ENCODE measurements at regions of chr1 and their contacts with region 1.

Region 1: GRCh38 chr1:37692078-37692833 is at the start of gene CDCA8:
- DNase-seq: peak; percentile 98
- H3K4me3 Mint-ChIP-seq: peak within 1 kb of the TSS; percentile 96
- H3K27ac Mint-ChIP-seq: peak within 1 kb of the TSS; percentile 90
- H3K4me1 Mint-ChIP-seq: peaks cover 28% of the 10 kb centered on the region
- H3K27me3 Mint-ChIP-seq: no peaks in the 10 kb centered on the region
- CTCF ChIP-seq: peak; percentile 41
- total RNA-seq, gene CDCA8: 17.3 and 21.8 TPM in 2 replicates

Region 2: GRCh38 chr1:37514350-37515184 is 177.7 kb before region 1 on chr1 and contains the start of gene MEAF6:
- CTCF ChIA-PET with region 1: interaction called, 3 read pairs
- POLR2A ChIA-PET with region 1: interaction called, 11 read pairs
- intact Hi-C with region 1: no loop called
- DNase-seq: peak; percentile 80
- H3K4me3 Mint-ChIP-seq: peak within 1 kb of the TSS; percentile 82
- H3K27ac Mint-ChIP-seq: peak within 1 kb of the TSS; percentile 82
- H3K4me1 Mint-ChIP-seq: peaks cover 16% of the 10 kb centered on the region
- H3K27me3 Mint-ChIP-seq: no peaks in the 10 kb centered on the region
- CTCF ChIP-seq: peak; percentile 72
- total RNA-seq, gene MEAF6: 71.3 and 72.0 TPM in 2 replicates

Region 3: DNA sequence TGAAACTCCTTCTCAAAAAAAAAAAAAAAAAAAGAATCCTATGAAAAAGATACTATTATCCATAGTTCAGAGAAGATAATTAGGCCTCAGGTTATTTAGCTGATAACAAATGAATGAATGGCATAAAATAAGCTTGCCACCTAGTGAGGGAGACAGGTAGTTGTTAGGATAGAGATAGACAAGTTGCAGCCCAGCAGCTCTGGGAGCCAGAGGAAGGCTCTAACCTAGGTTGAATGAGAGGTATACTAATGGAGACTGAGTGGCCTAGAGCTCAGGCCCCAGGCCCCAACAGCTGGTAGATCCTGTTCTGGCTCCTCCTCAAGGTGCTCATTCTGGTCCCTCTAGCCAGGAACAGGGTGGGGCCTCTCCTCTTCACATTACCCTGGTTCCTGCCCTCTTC is 37.0 kb before region 1 on chr1:
- CTCF ChIA-PET with region 1: no interaction called
- POLR2A ChIA-PET with region 1: no interaction called
- intact Hi-C with region 1: no loop called
- DNase-seq: no peak
- H3K4me3 Mint-ChIP-seq: no peak overlapping the region
- H3K27ac Mint-ChIP-seq: no peak overlapping the region
- H3K4me1 Mint-ChIP-seq: no peaks in the 10 kb centered on the region
- H3K27me3 Mint-ChIP-seq: no peaks in the 10 kb centered on the region
- CTCF ChIP-seq: no peak

Region 4: GRCh38 chr1:37676281-37677243 is 15.7 kb before region 1 on chr1:
- CTCF ChIA-PET with region 1: interaction called, 12 read pairs
- POLR2A ChIA-PET with region 1: interaction called, 4 read pairs
- intact Hi-C with region 1: no loop called
- DNase-seq: no peak
- H3K4me3 Mint-ChIP-seq: no peak overlapping the region
- H3K27ac Mint-ChIP-seq: no peak overlapping the region
- H3K4me1 Mint-ChIP-seq: no peaks in the 10 kb centered on the region
- H3K27me3 Mint-ChIP-seq: peaks cover 6% of the 10 kb centered on the region
- CTCF ChIP-seq: no peak

Region 5: DNA sequence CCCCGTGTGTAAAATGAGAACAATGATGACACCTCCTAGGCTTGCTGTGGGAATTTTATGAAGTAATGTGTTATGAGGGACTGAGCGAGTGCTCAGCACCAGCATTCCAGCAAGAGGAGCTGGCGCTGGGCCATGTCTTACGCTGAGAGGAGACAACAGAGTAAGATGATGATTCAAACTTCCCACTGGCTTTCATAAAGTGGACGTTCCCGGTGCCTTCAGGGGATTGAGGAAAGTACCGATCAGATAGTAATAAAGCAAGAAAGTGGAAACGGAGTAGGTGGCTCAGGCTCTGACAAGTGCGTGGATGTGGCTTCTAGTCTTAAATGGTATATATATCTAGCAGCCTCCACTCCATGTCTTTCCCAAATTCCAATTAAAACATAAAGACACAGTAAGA is 48.9 kb after region 1 on chr1:
- CTCF ChIA-PET with region 1: interaction called, 4 read pairs
- POLR2A ChIA-PET with region 1: interaction called, 14 read pairs
- intact Hi-C with region 1: no loop called
- DNase-seq: peak; percentile 94
- H3K4me3 Mint-ChIP-seq: peak overlapping the region; percentile 2
- H3K27ac Mint-ChIP-seq: no peak overlapping the region
- H3K4me1 Mint-ChIP-seq: peaks cover 15% of the 10 kb centered on the region
- H3K27me3 Mint-ChIP-seq: peaks cover 11% of the 10 kb centered on the region
- CTCF ChIP-seq: no peak

Region 6: GRCh38 chr1:37807555-37808368 is 115.5 kb after region 1 on chr1 and contains the starts of genes C1orf122 and YRDC:
- CTCF ChIA-PET with region 1: interaction called, 4 read pairs
- POLR2A ChIA-PET with region 1: interaction called, 99 read pairs
- intact Hi-C with region 1: loop called (anchors 2 kb)
- DNase-seq: peak; percentile 92
- H3K4me3 Mint-ChIP-seq: peak within 1 kb of the TSS; percentile 89
- H3K27ac Mint-ChIP-seq: peak within 1 kb of the TSS; percentile 96
- H3K4me1 Mint-ChIP-seq: peaks cover 10% of the 10 kb centered on the region
- H3K27me3 Mint-ChIP-seq: no peaks in the 10 kb centered on the region
- CTCF ChIP-seq: no peak
- total RNA-seq, gene C1orf122: 72.4 and 81.5 TPM in 2 replicates
- total RNA-seq, gene YRDC: 40.4 and 41.5 TPM in 2 replicates

Region 7: GRCh38 chr1:37875834-37876233 is 183.6 kb after region 1 on chr1:
- CTCF ChIA-PET with region 1: interaction called, 4 read pairs
- POLR2A ChIA-PET with region 1: no interaction called
- intact Hi-C with region 1: loop called (anchors 5 kb)
- DNase-seq: peak; percentile 38
- H3K4me3 Mint-ChIP-seq: no peak overlapping the region
- H3K27ac Mint-ChIP-seq: no peak overlapping the region
- H3K4me1 Mint-ChIP-seq: no peaks in the 10 kb centered on the region
- H3K27me3 Mint-ChIP-seq: no peaks in the 10 kb centered on the region
- CTCF ChIP-seq: peak; percentile 36

Region 8: DNA sequence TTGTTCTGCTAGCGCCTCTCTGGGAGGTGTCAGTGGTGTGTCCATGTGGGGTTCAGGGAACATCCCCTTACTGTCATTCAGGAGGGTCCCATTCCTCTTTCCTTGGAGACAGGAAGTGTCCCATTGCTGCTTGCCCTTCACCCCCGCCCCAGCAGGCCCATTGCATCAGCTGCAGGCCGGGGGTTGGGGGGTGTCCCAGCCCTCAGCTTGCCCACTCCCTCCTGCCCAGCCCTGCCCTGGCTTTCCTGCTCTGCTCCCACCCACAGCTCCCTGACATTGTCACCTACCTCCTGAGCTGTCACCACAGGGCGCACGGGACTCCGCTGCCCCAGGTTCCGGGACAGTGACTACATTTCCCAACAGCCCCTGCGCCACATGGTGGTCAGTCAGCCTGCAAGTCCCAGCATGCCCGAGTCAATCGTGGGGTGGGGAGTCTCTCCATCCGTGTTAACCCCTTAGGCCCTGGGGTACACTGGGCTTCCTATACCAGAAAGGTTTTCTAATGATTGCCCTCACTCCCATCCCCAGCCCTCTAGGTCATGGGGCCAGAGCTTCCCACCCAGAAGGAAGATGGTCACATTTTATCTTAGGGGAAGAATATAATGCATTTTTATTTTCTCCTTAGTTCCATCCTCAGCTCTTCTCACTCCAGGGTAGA is 254.6 kb after region 1 on chr1 and contains the start of gene INPP5B:
- CTCF ChIA-PET with region 1: no interaction called
- POLR2A ChIA-PET with region 1: no interaction called
- intact Hi-C with region 1: no loop called
- DNase-seq: no peak
- H3K4me3 Mint-ChIP-seq: peak within 1 kb of the TSS; percentile 33
- H3K27ac Mint-ChIP-seq: no peak within 1 kb of the TSS
- H3K4me1 Mint-ChIP-seq: no peaks in the 10 kb centered on the region
- H3K27me3 Mint-ChIP-seq: no peaks in the 10 kb centered on the region
- CTCF ChIP-seq: no peak
- total RNA-seq, gene INPP5B: 4.7 and 5.9 TPM in 2 replicates

Measured in MCF 10A (cell line).